Activated CD8-positive, alpha-beta T cell treated with anti-CD3 and anti-CD28 coated beads, Interleukin-2, amount 10 ng/mL, durations not matched to agents 7 days and 5 days (primary cell): ENCODE measurements at regions of chr5 and their contacts with region 1.

Region 1: GRCh38 chr5:39283231-39283818 is 64.0 kb upstream of the FYB1 start:
- DNase-seq: peak; percentile 81
- ATAC-seq: peak; percentile 100
- H3K4me3 Mint-ChIP-seq: no peak overlapping the region
- H3K27ac Mint-ChIP-seq: no peak overlapping the region
- H3K4me1 Mint-ChIP-seq: peaks cover 22% of the 10 kb centered on the region
- H3K27me3 Mint-ChIP-seq: peaks cover 3% of the 10 kb centered on the region

Region 2: DNA sequence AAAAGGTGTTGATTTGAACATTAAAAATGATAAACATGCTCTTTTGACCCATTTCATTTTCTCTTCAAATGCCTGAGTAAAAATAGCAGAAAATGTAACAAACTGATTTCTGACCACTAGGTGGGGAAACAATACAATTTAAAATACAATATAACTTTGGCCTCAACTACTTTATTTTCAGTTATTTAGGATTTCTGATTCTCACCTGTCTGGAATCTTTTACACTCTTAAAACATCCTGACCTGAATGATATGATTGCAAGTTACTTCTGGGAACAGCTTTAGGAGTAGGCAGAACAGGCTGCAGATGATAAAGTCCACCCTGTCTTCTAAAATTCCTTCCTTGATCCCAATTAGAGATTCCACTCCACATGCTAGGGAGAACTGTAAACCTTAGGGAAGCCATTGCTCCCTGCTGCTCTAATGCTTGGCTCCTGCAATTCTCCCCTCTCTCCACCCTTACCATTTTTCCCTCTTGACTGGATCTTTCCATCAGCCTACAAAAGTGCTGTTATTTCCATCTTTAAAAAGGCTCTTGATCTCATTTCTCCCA is 134.3 kb before region 1 on chr5:
- CTCF ChIA-PET with region 1: interaction called, 23 read pairs
- POLR2A ChIA-PET with region 1: no interaction called
- DNase-seq: no peak
- ATAC-seq: peak; percentile 18
- H3K4me3 Mint-ChIP-seq: no peak overlapping the region
- H3K27ac Mint-ChIP-seq: peak overlapping the region; percentile 64
- H3K4me1 Mint-ChIP-seq: peaks cover 45% of the 10 kb centered on the region
- H3K27me3 Mint-ChIP-seq: no peaks in the 10 kb centered on the region

Region 3: DNA sequence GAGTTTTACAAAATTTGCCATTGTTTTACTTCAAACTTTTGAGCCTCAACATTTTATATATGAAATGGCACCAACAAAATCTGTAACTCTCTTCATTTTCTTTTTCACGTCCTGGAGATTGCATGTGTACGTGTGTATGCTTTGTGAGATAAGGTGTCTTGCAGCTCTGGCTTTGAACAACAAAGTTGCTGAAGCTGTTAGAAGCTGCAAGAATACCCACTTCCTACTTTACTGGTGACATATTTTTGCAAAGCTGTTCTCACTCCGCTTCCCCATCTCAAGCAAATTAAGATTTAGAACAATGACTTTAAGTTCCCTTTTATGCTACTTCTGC is 105.7 kb before region 1 on chr5:
- CTCF ChIA-PET with region 1: interaction called, 12 read pairs
- POLR2A ChIA-PET with region 1: no interaction called
- DNase-seq: no peak
- ATAC-seq: peak; percentile 48
- H3K4me3 Mint-ChIP-seq: peak overlapping the region; percentile 64
- H3K27ac Mint-ChIP-seq: peak overlapping the region; percentile 87
- H3K4me1 Mint-ChIP-seq: peaks cover 95% of the 10 kb centered on the region
- H3K27me3 Mint-ChIP-seq: no peaks in the 10 kb centered on the region

Region 4: GRCh38 chr5:39209924-39210323 is 73.4 kb before region 1 on chr5:
- CTCF ChIA-PET with region 1: interaction called, 21 read pairs
- POLR2A ChIA-PET with region 1: interaction called, 4 read pairs
- DNase-seq: peak; percentile 92
- ATAC-seq: peak; percentile 77
- H3K4me3 Mint-ChIP-seq: peak overlapping the region; percentile 66
- H3K27ac Mint-ChIP-seq: peak overlapping the region; percentile 93
- H3K4me1 Mint-ChIP-seq: peaks cover 93% of the 10 kb centered on the region
- H3K27me3 Mint-ChIP-seq: no peaks in the 10 kb centered on the region

Region 5: DNA sequence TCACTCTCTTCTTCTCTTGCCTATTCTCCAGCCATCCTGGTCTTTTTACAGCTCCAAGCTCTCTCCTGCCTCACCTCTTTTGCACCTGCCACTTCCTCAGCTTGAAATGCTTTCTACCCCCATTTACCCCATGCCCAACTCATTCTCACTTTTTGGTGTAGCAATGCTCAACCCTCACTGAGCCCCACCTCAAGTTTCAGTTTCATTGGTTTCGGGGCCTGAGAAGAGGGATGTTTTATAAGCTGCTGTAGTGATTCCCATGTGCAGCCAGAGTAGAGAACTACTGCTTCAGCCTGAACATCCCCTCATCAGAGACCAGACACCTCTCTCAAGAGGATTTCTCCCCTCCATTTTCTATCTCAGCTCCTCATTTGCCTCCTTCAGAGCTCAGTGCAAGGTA is 18.8 kb before region 1 on chr5:
- CTCF ChIA-PET with region 1: interaction called, 23 read pairs
- POLR2A ChIA-PET with region 1: no interaction called
- DNase-seq: peak; percentile 61
- ATAC-seq: peak; percentile 90
- H3K4me3 Mint-ChIP-seq: peak overlapping the region; percentile 22
- H3K27ac Mint-ChIP-seq: peak overlapping the region; percentile 76
- H3K4me1 Mint-ChIP-seq: peaks cover 36% of the 10 kb centered on the region
- H3K27me3 Mint-ChIP-seq: no peaks in the 10 kb centered on the region